Aorta (tissue), 5 donors: ENCODE measurements at regions of chr1 and their contacts with region 1.

Region 1: GRCh38 chr1:33367485-33368405 is 46.8 kb upstream of the A3GALT2 start:
- DNase-seq: peak; percentile 91 to 97
- ATAC-seq: peak; percentile 89
- H3K4me3 ChIP-seq: no peak overlapping the region
- H3K27ac ChIP-seq: peak overlapping the region in 1 of 2 donors; percentile 65
- H3K4me1 ChIP-seq: peaks cover 2 to 3% of the 10 kb centered on the region in 2 donors
- H3K27me3 ChIP-seq: no peaks in the 10 kb centered on the region

Region 2: DNA sequence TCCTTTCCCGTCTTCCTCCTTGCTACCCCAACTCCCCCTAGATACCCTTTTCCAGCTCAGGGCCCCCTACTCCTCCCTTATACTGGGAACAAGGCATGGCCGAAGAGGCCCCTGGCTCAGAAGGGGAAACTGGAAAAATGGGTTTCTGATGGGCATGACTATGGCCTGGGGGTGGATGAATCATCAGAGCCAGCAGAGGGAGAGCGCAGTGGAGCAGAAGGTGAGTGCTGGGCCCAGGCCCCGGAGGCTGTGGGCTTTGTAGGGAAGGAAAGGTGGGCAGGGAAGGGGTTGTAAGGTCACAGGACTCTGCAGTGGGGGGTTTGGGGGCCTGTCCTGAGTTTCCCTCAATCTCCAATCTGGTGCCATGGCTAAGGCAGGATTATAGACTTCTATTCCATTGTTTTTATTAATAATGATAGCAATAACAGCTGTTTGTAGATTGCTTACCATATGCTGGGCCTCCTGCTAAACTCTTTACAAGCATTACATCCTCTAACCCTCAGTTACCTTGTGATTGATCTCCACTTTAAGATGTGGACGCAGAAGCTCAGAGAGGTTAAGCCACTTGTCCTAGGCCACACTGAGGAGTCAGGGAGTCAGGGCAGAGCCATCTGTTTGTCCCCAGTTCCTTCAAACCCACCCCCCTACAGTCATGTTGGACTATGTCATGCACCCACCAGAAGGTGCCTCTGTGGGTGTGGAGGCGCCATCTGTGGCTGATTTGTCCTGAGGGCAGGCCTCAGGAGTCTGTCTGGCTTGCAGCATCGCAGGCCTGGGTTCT is 147.7 kb before region 1 on chr1:
- intact Hi-C with region 1: loop called (anchors 1 to 5 kb)
- DNase-seq: no peak
- ATAC-seq: no peak
- H3K4me3 ChIP-seq: no peak overlapping the region
- H3K27ac ChIP-seq: no peak overlapping the region
- H3K4me1 ChIP-seq: no peaks in the 10 kb centered on the region
- H3K27me3 ChIP-seq: no peaks in the 10 kb centered on the region

Region 3: DNA sequence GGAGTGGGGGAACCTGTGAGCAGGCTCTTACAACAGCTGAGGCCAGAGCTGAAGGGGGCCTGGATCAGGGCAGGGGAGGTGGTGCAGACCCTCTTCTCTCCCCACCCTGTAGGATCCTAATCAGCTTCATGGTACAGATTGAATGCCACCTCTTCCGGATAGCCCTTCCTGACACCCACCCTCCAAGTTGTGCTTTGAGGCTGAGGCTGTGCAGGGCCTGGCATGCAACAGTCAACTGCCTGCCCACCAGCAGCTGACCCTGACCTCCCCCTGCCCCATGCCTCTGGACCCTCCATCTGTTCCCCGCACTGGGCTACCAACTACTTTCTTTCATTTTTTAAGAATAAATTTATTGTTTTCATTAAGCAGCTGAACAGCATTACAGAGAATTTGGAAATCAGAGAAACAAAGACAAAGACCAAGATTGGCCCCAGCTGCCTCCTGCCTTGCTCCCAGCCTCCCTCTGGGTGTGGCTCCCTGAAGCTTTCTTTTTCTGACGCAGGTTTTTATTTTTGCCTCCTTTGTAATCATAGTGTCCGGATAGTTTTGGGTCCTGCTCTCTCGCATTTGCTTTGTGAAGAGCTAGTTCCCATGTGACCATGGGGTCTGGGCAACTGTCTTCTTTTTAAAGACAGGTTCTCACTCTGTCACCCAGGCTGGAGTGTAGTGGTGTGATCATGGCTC is 98.7 kb before region 1 on chr1:
- intact Hi-C with region 1: no loop called
- DNase-seq: peak in 1 of 2 donors; percentile 58
- ATAC-seq: no peak
- H3K4me3 ChIP-seq: no peak overlapping the region
- H3K27ac ChIP-seq: no peak overlapping the region
- H3K4me1 ChIP-seq: peaks cover 4 to 7% of the 10 kb centered on the region in 2 donors
- H3K27me3 ChIP-seq: no peaks in the 10 kb centered on the region

Region 4: GRCh38 chr1:33338440-33339211 is 29.1 kb before region 1 on chr1:
- intact Hi-C with region 1: loop called in 1 of 2 experiments (anchors 5 kb)
- DNase-seq: peak in 1 of 2 donors; percentile 62
- ATAC-seq: peak; percentile 73
- H3K4me3 ChIP-seq: peak overlapping the region in 1 of 2 donors; percentile 8
- H3K27ac ChIP-seq: peak overlapping the region; percentile 78 to 81
- H3K4me1 ChIP-seq: peaks cover 14 to 15% of the 10 kb centered on the region in 2 donors
- H3K27me3 ChIP-seq: no peaks in the 10 kb centered on the region

Region 5: GRCh38 chr1:33396188-33397124 is 28.7 kb after region 1 on chr1:
- intact Hi-C with region 1: no loop called
- DNase-seq: no peak
- ATAC-seq: no peak
- H3K4me3 ChIP-seq: no peak overlapping the region
- H3K27ac ChIP-seq: peak overlapping the region in 1 of 2 donors; percentile 33
- H3K4me1 ChIP-seq: peaks cover 0 to 1% of the 10 kb centered on the region in 2 donors
- H3K27me3 ChIP-seq: no peaks in the 10 kb centered on the region

Region 6: DNA sequence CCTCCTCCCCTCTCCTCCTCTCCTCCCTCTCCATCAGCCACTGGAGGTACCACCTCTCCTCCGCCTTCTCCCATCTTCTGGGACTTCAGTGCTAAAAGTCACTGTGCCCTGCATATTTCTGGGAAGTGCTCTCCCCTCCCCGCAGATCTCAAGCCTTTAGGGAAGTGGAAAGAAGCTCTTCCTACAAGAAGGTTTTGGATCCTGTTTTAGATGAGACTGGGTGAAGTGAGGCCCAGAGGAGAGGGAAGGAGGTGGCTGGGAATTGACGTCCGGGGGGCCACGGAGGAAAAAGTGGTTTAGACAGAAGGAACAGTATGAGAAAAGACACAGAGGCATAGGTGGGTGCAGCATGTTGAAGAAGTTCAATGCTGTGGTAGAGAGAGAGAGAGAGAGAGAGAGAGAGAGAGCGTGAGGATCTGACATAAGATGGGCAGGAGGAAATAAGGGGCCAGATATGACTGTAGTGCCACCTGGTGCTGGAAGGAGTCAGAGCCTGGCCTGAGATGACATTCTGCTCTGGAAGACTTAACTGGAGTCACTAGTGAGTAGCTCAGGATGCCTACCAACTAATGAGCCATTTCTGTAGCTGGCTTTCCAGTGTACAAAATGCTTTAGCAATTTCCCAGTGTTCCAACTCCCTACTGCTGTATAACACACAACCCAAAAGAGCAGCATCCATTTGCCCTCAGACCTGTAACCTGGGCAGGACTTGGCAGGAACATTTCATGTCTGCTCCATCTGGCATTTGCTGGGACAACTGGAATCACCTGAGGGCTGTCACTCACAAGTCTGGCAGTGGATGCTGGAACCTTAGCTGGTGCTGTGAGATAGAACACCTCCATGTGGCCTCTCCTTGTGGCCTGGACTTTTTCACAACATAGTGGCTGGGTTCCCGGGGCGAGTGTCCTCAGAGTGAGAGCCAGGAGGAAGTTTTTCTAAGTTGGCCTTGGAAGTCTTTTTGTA is 88.1 kb after region 1 on chr1:
- intact Hi-C with region 1: loop called in 1 of 2 experiments (anchors 5 kb)
- DNase-seq: peak in 1 of 2 donors; percentile 63
- ATAC-seq: peak; percentile 73
- H3K4me3 ChIP-seq: no peak overlapping the region
- H3K27ac ChIP-seq: peak overlapping the region in 1 of 2 donors; percentile 69
- H3K4me1 ChIP-seq: peaks cover 4 to 5% of the 10 kb centered on the region in 2 donors
- H3K27me3 ChIP-seq: no peaks in the 10 kb centered on the region

Region 7: DNA sequence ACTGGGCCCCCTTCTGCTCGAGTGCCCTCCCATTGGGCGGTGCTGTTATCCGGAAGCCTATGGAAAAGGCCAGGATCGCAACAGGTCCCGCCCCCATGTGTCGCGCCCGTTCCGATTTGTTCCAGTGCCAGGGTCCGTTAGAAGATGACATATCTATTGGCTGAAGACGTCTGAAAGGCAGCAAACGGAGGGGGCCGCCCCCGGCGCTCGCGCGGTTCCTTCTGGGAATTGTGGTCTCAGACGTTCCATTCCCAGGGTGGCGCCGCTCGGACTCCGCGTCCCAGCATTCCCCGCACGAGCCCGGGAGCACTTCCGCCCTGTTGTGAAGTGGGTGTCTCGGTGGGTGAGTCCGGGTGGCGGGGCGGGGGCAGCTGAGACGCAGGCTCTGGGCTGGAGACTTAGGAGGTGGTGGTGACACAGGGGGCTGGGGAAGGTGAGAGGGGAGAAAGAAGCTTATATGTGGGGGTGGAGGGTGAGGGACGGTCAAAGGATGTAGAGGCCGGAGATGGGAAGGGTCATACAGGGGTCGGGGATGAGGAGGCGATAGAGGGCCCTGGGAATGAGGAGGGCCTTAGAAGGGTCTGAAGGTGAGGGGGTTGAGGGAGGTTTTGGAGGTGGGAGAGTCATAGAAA is 104.7 kb after region 1 on chr1 and contains the start of gene ZSCAN20:
- intact Hi-C with region 1: loop called in 1 of 2 experiments (anchors 5 kb)
- DNase-seq: peak; percentile 98 to 99
- ATAC-seq: peak; percentile 94
- H3K4me3 ChIP-seq: peak within 1 kb of the TSS; percentile 5 to 55
- H3K27ac ChIP-seq: peak within 1 kb of the TSS; percentile 47 to 74
- H3K4me1 ChIP-seq: peaks cover 5 to 10% of the 10 kb centered on the region in 2 donors
- H3K27me3 ChIP-seq: no peaks in the 10 kb centered on the region
- total RNA-seq, gene ZSCAN20: 5.9 to 8.0 TPM

Region 8: GRCh38 chr1:33616773-33617172 is 249.0 kb after region 1 on chr1:
- intact Hi-C with region 1: loop called in 1 of 2 experiments (anchors 10 kb)
- DNase-seq: no peak
- ATAC-seq: no peak
- H3K4me3 ChIP-seq: no peak overlapping the region
- H3K27ac ChIP-seq: no peak overlapping the region
- H3K4me1 ChIP-seq: no peaks in the 10 kb centered on the region
- H3K27me3 ChIP-seq: no peaks in the 10 kb centered on the region